Right ventricle myocardium inferior (tissue), 1 donor: ENCODE measurements at regions of chr3 and their contacts with region 1.

Region 1: GRCh38 chr3:126389112-126389793 is 5.5 kb upstream of the CFAP100 start:
- DNase-seq: peak; percentile 95
- ATAC-seq: peak; percentile 97

Region 2: DNA sequence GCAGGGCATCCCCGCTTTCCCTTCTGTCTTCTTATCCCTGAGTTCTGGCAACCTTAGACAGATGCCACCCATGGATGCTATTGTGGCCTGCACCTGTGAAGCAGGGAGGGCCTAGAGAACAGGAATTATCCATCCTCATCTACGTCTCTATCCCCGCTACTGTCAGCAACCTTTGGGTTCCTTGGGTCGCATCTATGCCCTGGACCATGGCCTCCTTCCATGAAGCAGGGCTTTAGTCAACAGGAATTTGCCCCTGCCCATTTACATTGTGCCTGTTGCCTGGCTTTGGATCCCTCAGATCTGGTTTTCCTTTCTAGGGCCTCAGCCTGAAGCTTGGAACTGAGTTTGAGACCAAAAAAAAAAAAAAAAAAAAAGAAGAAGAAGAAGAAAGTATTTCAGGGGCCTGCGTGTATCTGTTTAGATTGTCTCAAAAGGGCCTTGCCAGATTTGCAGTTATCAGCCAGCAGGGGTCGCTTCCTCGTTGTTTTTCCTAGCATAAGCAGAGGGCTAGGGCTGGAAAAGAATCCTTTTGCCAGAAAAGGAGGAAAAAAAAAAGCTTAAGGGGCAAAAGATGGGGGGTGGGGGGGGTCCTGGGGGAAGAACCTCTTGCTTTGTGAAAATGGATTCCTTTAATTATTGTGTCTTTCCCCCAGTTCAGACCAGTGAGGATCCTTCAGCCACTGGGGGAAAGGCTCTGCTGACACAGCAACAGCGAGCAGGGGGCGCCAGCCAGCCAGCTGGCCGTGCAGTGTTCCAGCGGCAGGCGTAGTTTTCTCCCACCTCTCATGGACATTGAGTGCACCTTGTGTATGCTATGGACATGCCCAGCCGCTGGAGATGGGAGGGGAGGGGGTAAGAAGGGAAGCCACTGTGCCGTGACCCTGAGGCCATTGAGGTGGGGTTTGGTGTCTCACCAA is 143.2 kb before region 1 on chr3:
- intact Hi-C with region 1: loop called (anchors 1 kb)
- DNase-seq: peak; percentile 72
- ATAC-seq: peak; percentile 89

Region 3: DNA sequence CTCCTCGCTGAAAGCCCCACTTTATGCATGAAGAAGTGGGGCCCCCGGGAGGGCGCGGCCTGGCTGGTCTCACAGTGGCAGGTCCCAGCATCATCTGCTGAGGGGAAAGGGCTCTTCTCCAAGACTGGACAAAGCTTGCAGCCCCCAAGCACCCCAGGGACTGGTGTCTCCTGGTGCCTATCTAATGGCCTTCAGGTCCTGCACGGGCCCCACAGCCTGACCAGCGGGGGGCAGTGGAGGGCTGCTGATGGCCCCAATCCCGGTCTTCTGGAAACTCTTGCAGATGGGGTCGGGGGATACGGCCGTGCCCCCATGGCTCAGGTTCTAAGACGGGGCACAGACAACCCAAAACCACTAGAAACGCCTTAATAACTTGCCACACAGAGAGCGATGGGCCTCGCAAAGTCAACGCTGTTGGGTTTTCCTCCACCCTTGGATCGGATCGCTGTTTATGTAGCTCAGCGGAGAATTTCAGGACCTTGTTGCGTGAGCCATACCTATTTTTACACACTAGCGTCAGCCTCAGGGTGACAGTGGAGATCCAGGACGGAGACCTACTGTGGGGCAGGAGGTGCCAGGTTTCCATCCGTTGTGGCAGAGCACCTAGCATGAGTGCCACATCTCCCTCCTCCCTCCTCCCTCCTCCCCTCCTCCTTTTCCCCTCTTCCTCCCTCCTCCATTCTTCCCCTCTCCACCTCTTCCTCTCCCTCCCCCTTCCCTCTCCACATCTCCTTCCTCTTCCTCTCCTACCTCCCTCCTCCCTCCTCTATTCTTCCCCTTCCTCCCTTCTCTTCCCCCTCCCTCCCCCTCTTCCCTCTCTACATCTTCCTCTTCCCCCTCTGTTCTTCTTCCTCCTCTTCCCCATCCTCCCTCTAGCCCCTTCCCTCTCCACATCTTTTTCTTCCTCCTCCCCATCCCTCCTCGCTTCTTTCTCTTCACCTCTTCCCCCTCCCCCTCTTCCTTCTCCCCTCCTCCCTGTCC is 129.6 kb before region 1 on chr3:
- intact Hi-C with region 1: loop called (anchors 1 kb)
- DNase-seq: no peak
- ATAC-seq: peak; percentile 80

Region 4: DNA sequence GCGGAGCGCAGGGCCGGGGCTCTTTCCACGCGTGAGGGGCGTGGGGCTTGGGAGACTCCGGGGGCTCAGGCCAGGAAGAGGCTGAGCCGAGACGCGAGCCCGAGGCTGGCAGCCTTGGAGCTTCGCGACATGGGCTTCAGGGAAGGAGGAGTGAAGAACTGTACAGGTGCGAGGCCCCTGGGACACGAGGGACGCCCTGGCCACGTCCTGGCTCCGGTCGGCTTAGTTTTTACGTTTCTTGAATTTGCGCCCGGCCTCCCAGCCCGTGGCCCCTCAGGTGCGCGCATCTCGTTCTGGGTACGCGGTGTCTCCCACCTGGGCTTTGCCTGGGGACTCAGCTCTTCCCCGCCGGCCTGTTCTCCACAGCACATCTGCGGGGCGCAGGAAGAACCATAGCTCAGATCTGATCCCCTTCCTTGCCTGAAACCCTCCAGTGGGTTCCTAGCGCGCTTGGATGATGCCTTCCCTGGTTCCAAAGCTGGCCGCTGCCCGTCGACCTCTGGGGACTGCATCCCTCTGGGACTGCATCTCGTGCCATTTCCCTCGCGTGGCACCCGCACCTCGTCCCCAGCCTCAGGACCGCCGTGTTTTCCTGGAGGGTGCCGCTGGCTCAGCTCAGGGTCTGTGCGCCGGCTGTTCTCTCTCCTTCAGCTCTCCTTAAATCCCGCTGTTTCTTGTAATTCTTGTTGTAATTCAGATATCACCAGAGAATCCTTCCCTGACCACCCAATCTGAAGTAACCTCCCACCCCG is 315.4 kb after region 1 on chr3:
- intact Hi-C with region 1: no loop called
- DNase-seq: no peak
- ATAC-seq: no peak